ENCODE measurements at regions of chr2 and their contacts with region 1.

Region 1: DNA sequence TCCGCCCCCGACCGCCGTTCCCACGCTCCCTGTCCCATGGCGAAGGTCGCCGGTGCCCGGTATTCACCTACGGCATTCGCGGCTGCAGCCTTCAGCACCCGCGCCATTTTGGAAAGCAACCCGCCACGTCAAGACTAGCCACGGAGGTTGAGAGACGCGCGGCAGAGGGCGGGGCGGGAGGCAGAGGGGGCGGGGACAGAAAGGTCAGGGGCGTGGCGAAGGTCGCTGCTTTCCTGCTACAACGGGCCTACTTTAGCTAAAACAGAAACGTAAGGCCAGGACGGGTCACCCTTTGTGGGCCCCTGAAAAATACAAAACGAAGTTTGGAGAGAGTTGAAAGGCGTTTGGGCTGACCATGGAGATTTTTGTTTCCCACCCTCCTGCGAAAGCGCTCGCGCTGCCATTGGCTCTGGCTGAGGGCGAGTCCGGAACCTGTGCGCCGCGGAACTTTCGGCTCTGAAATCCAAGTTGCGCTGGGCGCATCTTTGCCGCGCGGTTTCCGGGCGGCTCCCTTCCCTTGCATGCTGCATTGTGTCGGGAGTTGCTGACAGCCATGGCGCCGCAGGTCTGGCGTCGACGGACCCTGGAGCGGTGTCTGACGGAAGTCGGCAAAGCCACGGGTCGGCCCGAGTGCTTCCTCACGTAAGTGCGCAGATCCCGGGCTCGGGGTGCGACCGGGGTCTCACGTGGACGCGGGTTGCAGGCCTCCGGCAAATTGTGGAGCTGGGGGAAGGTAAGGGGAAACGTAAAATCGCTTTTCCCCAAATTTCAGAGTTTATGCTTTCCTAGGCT is at the starts of genes MCEE and MPHOSPH10:
- DNase-seq: peak; percentile 89
- H3K4me3 Mint-ChIP-seq: no peak within 1 kb of the TSS
- H3K27ac Mint-ChIP-seq: no peak within 1 kb of the TSS
- H3K4me1 Mint-ChIP-seq: no peaks in the 10 kb centered on the region
- H3K27me3 Mint-ChIP-seq: no peaks in the 10 kb centered on the region
- CTCF ChIP-seq: no peak
- total RNA-seq, gene MCEE: 14.7 and 14.9 TPM in 2 replicates
- total RNA-seq, gene MPHOSPH10: 31.4 and 32.8 TPM in 2 replicates

Region 2: DNA sequence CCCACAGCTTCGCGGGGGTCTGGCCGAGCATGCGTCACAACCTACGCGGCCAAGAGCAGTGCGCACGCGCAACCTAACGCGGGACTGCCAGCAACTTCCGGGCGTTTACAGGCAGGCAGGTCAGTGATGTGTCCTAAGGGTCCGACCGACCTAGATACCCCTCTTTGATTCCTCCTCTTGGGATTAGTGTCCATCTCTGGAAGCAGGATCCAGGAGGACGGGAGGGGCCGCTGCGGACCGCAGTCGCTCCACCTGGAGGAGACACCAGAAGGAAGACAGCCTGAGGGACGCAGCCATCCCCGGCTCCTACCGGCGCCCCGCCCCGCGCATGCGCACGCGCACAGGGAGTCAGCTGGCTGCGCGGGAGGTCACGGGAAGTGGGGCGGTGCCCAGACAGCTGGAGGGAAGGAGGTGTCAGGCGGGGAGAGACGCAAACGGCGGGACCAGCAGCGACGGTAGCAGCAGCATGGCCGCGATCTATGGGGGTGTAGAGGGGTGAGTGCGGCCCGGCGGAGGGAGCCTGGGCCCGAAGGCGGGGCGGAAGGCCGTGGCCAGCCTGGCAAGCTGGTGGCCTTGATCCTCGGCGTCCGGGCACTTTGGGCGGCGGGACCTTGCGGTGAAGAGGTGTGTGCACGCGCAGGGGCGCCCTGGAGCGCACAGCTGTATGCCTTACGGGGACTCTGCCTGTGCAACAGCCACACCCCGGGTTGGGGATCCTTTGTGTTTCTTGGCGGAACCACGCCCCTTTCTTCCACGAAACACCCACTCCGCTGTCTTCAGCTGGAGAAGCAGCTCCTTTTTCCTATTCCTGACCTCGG is 61.9 kb before region 1 on chr2 and contains the start of gene NAGK:
- CTCF ChIA-PET with region 1: interaction called, 4 read pairs
- POLR2A ChIA-PET with region 1: interaction called, 123 read pairs
- intact Hi-C with region 1: loop called (anchors 5 kb)
- DNase-seq: peak; percentile 95
- H3K4me3 Mint-ChIP-seq: peak within 1 kb of the TSS; percentile 96
- H3K27ac Mint-ChIP-seq: peak within 1 kb of the TSS; percentile 93
- H3K4me1 Mint-ChIP-seq: peaks cover 22% of the 10 kb centered on the region
- H3K27me3 Mint-ChIP-seq: no peaks in the 10 kb centered on the region
- CTCF ChIP-seq: no peak
- total RNA-seq, gene NAGK: 30.9 and 45.7 TPM in 2 replicates

Region 3: DNA sequence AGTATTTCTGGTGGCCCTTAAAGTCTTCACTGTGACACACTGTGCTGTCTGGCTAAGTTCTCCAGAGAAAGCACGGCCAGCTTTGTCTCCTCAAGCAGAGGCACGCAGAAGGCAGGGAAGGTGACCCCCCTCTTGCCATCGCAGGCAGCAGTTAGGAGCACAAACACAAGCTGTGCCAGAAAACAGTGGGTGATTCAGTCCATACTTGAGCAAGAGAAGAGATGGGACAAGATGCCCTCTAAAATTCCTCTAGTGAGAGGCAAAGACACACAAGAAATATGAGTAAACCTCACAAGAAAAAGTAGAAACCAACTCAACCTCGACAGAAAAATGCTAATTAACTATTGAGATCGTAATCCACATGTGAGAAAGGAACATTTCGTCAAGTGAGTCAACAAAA is 10.1 kb before region 1 on chr2:
- CTCF ChIA-PET with region 1: interaction called, 4 read pairs
- POLR2A ChIA-PET with region 1: interaction called, 10 read pairs
- intact Hi-C with region 1: no loop called
- DNase-seq: no peak
- H3K4me3 Mint-ChIP-seq: no peak overlapping the region
- H3K27ac Mint-ChIP-seq: no peak overlapping the region
- H3K4me1 Mint-ChIP-seq: peaks cover 9% of the 10 kb centered on the region
- H3K27me3 Mint-ChIP-seq: no peaks in the 10 kb centered on the region
- CTCF ChIP-seq: no peak

Region 4: DNA sequence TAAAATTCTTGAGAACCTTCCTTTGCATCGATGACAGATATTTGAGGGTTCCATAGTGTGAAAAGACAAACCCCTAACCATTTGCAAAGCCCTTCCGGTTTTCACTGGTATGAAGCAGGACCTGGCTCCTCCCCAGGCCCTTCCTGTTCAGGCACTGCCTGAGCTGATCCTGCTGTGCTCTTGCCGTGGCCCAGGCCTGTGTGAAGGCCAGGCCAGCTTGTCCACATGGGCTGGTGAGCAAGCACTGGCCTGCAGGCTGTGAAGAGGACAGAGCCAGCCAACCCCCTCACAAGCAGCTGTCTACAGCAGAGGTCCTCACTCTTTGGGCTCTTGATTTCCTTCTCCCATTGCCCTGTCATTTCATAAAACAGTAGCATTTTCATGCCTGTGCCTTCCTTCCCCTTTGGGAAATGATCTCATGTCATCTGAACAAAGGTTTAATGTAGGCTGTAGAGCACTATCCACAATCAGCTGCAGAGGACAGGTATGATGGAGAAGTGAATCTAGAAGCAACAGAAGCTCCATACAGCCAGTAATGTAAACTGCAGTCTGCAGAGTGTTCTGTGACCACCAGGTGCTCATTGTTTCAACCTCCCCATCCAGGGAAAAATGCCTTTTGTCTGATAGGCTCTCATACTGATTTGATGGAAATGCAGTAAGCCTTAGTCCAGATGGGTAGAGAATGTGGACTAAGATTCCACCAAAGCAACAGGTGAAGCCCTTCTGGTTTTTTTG is 19.9 kb after region 1 on chr2:
- CTCF ChIA-PET with region 1: interaction called, 3 read pairs
- POLR2A ChIA-PET with region 1: interaction called, 15 read pairs
- intact Hi-C with region 1: no loop called
- DNase-seq: no peak
- H3K4me3 Mint-ChIP-seq: no peak overlapping the region
- H3K27ac Mint-ChIP-seq: no peak overlapping the region
- H3K4me1 Mint-ChIP-seq: no peaks in the 10 kb centered on the region
- H3K27me3 Mint-ChIP-seq: no peaks in the 10 kb centered on the region
- CTCF ChIP-seq: no peak

Region 5: DNA sequence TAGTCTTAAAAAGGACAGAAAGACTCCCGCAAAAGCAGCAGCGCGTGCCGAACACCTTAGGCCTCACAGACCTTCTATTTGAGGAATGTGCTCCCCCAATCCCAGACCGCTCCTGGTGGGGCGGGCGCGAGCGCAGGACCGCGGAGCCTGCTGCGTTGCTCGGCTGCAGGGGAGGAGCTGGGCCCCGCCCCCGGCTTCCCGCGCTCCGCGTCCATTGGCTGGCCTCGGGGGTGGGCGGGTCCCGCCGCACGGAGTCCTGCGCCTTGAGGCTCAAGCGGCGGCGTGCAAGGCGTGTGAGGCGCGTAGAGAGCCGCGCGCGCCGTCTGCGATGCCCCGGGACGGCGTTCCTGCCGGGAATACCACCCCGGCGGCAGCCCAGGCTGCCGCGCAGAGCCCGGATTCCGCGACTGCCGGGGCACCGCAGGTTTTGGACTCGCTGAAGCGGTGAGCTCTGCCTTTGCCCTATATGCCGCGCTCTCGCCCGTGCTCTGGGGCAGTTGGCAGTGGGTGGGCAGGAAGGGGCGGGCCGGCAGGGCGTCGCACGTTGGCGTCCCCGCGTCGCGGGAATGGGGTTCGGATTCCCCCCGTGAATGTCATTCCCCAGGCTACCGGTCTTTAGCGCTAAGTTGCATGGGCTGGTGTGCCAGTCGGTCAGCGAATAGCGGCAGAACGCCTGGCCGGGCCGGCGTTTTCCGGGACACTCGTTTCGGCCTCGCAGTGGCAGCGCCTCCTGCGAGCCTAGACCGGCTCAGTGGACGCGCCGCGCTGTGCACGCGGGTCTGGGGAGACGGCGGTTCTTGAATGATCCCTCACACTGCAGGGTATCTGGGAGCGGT is 146.2 kb after region 1 on chr2:
- CTCF ChIA-PET with region 1: no interaction called
- POLR2A ChIA-PET with region 1: interaction called, 16 read pairs
- intact Hi-C with region 1: no loop called
- DNase-seq: peak; percentile 91
- H3K4me3 Mint-ChIP-seq: peak overlapping the region; percentile 84
- H3K27ac Mint-ChIP-seq: no peak overlapping the region
- H3K4me1 Mint-ChIP-seq: peaks cover 16% of the 10 kb centered on the region
- H3K27me3 Mint-ChIP-seq: peaks cover 29% of the 10 kb centered on the region
- CTCF ChIP-seq: no peak

Measured in MCF 10A (cell line).